GM12878 (cell line): ENCODE measurements at regions of chr3 and their contacts with region 1.

Region 1: DNA sequence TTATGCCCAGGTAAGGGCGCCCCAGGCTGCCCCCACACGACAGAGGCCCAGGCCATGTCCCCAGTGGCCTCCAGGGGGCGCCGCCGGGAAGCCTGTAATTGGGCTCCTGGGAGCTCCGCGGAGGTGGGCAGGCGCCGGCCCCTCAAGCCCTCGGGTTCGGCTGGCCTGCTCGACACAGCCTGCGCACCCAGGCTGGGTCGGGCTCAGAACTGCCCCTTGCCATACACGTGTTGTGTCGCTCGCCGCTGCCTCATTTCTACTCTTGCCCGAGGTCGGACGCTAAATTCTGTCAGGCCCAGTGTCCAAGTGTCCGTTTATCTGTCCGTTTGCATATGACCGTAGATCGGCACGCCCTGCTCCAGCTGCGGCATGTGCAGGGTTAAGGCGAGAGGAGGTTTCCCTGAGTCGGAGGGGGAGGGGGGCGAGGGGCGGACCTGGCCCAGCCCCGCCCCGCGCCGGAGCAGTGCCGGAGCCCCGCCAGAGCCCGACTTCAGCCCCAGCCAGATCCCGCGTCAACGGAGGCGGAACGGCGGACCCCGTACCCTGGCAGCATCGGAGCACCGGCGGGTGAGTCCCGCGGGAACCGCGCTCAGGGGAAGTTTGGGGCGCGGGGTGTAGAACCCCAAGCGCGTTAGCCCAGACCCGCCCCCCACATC is at the start of gene KLHDC8B:
- DNase-seq: peak; percentile 12
- ATAC-seq: peak; percentile 90
- H3K4me3 ChIP-seq: peak within 1 kb of the TSS; percentile 74
- H3K27ac ChIP-seq: no peak within 1 kb of the TSS
- H3K4me1 ChIP-seq: peaks cover 5% of the 10 kb centered on the region
- H3K27me3 ChIP-seq: no peaks in the 10 kb centered on the region
- CTCF ChIP-seq: peak; percentile 93 to 96 (median 96)
- EP300 ChIP-seq: no peak
- POLR2A ChIP-seq: peak; percentile 53
- RAD21 ChIP-seq: peak; percentile 69
- polyA plus RNA-seq, gene KLHDC8B: 0.40 TPM in 1 of 2 experiments, not detected in the other

Region 2: DNA sequence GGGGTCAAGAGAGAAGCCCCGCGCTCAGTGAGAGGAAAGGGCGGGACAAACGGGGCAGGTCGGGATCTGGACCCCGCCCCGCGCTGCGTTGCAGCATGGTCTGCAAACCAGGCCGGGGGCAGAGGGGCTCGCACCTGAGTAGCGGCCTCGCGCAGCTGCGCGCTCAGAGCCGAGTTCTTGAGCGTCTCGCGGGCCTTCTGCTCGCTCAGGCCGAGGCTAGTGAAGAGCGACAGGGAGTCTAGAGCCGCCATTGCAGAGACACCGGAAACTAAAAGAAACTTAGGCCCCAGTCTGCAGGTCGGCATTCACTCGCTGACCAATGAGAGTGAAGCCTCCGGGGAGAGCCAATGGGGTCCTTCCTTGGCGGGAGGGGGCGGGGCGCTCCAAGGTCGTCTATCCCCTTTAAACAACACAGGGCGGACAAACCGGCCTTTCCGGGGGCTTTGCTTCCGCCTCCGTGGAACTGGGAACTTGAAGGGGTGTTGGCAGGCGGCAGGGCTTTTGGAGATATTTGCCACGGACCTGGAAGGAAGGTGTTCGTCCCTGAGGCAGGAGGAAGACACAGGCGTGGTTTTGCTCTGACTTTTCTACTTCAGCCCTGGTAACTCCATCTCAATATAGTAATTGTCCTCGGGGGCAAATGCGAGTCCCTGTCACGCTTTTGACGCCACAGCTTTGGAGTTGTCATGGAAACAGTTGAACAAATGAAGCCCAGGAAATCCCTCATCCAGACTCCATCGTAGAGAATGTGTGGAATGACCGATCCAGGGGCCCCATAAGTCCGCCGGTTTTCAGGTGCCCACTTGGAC is 66.6 kb before region 1 on chr3 and contains the start of gene QARS1:
- CTCF ChIA-PET with region 1: no interaction called
- POLR2A ChIA-PET with region 1: no interaction called
- RAD21 ChIA-PET with region 1: no interaction called
- SMC1A ChIA-PET with region 1: no interaction called
- in situ Hi-C with region 1: no loop called
- intact Hi-C with region 1: no loop called
- DNase-seq: peak; percentile 69
- ATAC-seq: peak; percentile 100
- H3K4me3 ChIP-seq: peak within 1 kb of the TSS; percentile 100
- H3K27ac ChIP-seq: peak within 1 kb of the TSS; percentile 92
- H3K4me1 ChIP-seq: peaks cover 11% of the 10 kb centered on the region
- H3K27me3 ChIP-seq: no peaks in the 10 kb centered on the region
- CTCF ChIP-seq: no peak
- EP300 ChIP-seq: no peak
- POLR2A ChIP-seq: peak; percentile 91
- RAD21 ChIP-seq: no peak
- polyA plus RNA-seq, gene QARS1: 229 to 328 TPM

Region 3: GRCh38 chr3:49181351-49181750 is 10.1 kb after region 1 on chr3:
- CTCF ChIA-PET with region 1: interaction called, 17 read pairs
- POLR2A ChIA-PET with region 1: no interaction called
- RAD21 ChIA-PET with region 1: interaction called, 3 read pairs
- SMC1A ChIA-PET with region 1: no interaction called
- in situ Hi-C with region 1: no loop called
- intact Hi-C with region 1: no loop called
- DNase-seq: no peak
- ATAC-seq: no peak
- H3K4me3 ChIP-seq: no peak overlapping the region
- H3K27ac ChIP-seq: no peak overlapping the region
- H3K4me1 ChIP-seq: no peaks in the 10 kb centered on the region
- H3K27me3 ChIP-seq: no peaks in the 10 kb centered on the region
- CTCF ChIP-seq: no peak
- EP300 ChIP-seq: no peak
- POLR2A ChIP-seq: no peak
- RAD21 ChIP-seq: no peak